ENCODE measurements at regions of chr12 and their contacts with region 1.

Region 1: GRCh38 chr12:101839324-101840283 is 8.8 kb upstream of the GNPTAB start:
- DNase-seq: peak; percentile 45
- H3K4me3 ChIP-seq: no peak overlapping the region
- H3K27ac ChIP-seq: no peak overlapping the region
- H3K27me3 ChIP-seq: no peaks in the 10 kb centered on the region
- CTCF ChIP-seq: peak; percentile 89

Region 2: DNA sequence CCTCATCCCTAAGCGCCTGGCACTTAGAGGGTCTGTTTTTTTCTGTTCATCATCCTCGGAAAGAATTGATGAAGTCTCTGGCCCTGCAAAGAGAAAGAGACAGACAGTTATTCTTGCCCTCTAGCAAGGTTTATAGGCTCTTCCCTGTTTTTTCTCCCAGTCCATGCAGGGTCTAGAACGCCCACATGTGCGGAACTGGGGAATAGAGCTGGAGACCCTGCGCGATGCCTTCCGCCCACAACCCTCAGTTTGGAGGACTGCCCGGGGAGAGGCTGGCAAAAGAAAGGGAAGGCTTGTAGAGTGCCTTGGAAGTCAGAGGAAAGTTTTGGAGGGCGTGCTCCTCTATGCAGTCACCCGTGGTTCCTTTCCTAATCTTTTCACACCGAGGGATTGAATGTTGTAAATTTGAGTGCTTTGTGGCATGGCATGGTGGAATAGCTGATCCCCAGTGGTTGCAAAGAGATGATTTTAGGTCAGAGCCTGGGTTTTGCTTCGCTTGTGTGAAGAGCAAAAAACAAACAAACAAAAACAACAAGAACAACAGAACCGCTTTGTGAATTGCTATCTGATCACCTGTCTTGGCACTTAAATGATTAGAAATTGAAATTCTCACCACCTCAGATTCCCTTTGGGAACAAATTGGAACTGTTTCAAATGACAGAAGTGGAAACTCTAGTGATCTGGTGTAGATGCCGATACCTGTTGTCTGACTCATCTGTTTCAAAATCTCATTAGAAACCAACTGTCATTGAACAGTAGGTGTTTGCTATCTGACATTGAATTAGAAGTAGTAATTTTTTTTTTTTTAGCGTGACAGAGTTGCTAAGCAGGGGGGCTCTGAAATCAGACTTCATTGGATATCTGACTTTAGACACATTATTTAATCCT is 1265.2 kb before region 1 on chr12:
- CTCF ChIA-PET with region 1: no interaction called
- POLR2A ChIA-PET with region 1: no interaction called
- DNase-seq: no peak
- H3K4me3 ChIP-seq: peak overlapping the region; percentile 82
- H3K27ac ChIP-seq: peak overlapping the region; percentile 47
- H3K27me3 ChIP-seq: no peaks in the 10 kb centered on the region
- CTCF ChIP-seq: no peak

Region 3: GRCh38 chr12:101021909-101022388 is 817.7 kb before region 1 on chr12:
- CTCF ChIA-PET with region 1: no interaction called
- POLR2A ChIA-PET with region 1: no interaction called
- DNase-seq: peak; percentile 61
- H3K4me3 ChIP-seq: no peak overlapping the region
- H3K27ac ChIP-seq: no peak overlapping the region
- H3K27me3 ChIP-seq: no peaks in the 10 kb centered on the region
- CTCF ChIP-seq: no peak

Region 4: GRCh38 chr12:101407436-101408345 is 431.9 kb before region 1 on chr12 and contains the start of gene ARL1:
- CTCF ChIA-PET with region 1: interaction called, 11 read pairs
- POLR2A ChIA-PET with region 1: no interaction called
- DNase-seq: peak; percentile 73
- H3K4me3 ChIP-seq: peak within 1 kb of the TSS; percentile 90
- H3K27ac ChIP-seq: peak within 1 kb of the TSS; percentile 96
- H3K27me3 ChIP-seq: no peaks in the 10 kb centered on the region
- CTCF ChIP-seq: no peak
- polyA plus RNA-seq, gene ARL1: 171 and 204 TPM in 2 replicates

Region 5: GRCh38 chr12:101773650-101774162 is 65.9 kb before region 1 on chr12:
- CTCF ChIA-PET with region 1: interaction called, 97 read pairs
- POLR2A ChIA-PET with region 1: interaction called, 5 read pairs
- DNase-seq: peak; percentile 34
- H3K4me3 ChIP-seq: no peak overlapping the region
- H3K27ac ChIP-seq: no peak overlapping the region
- H3K27me3 ChIP-seq: no peaks in the 10 kb centered on the region
- CTCF ChIP-seq: peak; percentile 86

Region 6: DNA sequence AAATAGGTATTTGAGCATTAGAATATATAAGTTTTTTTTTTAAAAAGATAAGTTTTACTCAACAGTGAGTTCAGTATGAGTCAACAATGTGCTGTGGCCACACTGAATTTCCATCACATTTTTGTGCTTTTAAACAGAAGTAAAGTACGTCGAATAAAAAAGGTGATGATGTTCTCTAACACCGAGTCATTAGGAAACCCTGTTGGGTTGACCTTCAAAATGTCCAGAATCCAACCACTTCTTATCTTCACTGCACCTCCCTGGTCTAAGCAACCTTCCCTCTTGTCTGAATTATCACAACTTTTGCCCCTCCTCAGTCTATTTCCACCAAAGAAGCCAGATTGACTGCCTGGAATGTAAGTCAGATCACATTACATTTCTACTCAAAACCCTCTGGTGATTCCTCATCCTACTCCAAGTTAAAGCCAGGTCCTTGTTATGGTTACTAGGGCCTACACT is 57.3 kb before region 1 on chr12:
- CTCF ChIA-PET with region 1: interaction called, 18 read pairs
- POLR2A ChIA-PET with region 1: no interaction called
- DNase-seq: no peak
- H3K4me3 ChIP-seq: no peak overlapping the region
- H3K27ac ChIP-seq: peak overlapping the region; percentile 53
- H3K27me3 ChIP-seq: no peaks in the 10 kb centered on the region
- CTCF ChIP-seq: no peak

Region 7: DNA sequence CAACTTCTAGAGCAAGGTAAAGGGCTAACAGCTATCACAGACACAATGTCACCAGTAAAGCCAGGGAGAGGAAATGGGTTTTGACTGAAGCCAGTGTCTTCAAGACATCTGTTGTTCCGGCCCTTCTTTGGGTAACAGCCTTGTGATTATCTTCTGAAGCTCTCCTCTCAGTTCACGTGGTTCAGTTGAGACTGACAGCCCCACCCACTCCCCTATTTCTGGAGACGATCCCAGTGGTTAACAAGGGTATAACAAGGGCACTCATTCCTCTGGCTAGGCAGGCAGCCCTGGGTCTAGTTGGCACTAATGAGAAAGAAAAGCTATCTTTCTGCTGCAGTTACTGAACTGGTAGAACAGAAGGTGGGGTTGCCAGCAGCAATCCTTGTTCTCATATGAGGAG is 15.7 kb before region 1 on chr12:
- CTCF ChIA-PET with region 1: interaction called, 72 read pairs
- POLR2A ChIA-PET with region 1: no interaction called
- DNase-seq: no peak
- H3K4me3 ChIP-seq: no peak overlapping the region
- H3K27ac ChIP-seq: peak overlapping the region; percentile 12
- H3K27me3 ChIP-seq: no peaks in the 10 kb centered on the region
- CTCF ChIP-seq: peak; percentile 6; the same call in 1 of the 2 replicates

Region 8: GRCh38 chr12:101854747-101855146 is 15.1 kb after region 1 on chr12:
- CTCF ChIA-PET with region 1: interaction called, 59 read pairs
- POLR2A ChIA-PET with region 1: interaction called, 3 read pairs
- DNase-seq: no peak
- H3K4me3 ChIP-seq: no peak overlapping the region
- H3K27ac ChIP-seq: no peak overlapping the region
- H3K27me3 ChIP-seq: no peaks in the 10 kb centered on the region
- CTCF ChIP-seq: no peak

Region 9: GRCh38 chr12:101876861-101877815 is 37.5 kb after region 1 on chr12 and contains the start of gene DRAM1:
- CTCF ChIA-PET with region 1: interaction called, 9 read pairs
- POLR2A ChIA-PET with region 1: interaction called, 11 read pairs
- DNase-seq: peak; percentile 71
- H3K4me3 ChIP-seq: peak within 1 kb of the TSS; percentile 99
- H3K27ac ChIP-seq: peak within 1 kb of the TSS; percentile 96
- H3K27me3 ChIP-seq: no peaks in the 10 kb centered on the region
- CTCF ChIP-seq: no peak
- polyA plus RNA-seq, gene DRAM1: 54.9 and 57.5 TPM in 2 replicates